Activated CD8-positive, alpha-beta T cell treated with anti-CD3 and anti-CD28 coated beads for 36 hours (primary cell): ENCODE measurements at regions of chrX and their contacts with region 1.

Region 1: DNA sequence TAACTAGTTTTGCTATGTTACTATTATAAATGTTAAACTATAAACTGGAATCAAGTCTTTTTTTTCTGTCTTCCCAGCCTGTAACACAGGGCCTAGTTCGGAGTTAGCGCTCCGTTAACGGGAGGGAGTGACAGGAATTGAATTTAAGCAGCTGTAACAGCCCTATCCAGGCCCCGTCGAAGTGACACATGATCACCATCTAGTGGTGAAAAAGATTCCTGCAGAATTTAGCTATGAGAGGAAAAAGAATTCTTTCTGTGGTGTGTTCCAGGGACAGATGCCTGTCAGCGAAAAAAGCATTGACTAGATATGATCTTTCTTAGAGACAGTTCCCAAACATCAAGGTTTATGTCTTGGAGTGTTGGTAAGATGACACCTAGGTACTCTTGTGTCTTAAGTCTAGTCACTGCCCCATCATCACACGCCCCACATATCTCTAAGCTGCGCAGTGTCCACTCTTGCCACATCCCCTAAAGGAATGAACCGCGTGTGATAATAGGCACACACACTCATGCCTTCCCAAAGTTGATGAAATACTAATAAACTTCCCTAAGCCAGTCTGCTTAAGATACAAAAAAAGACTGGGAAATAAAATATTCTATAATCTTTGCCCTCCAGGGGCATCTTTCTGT is 2.0 kb downstream of the GAB3 start:
- DNase-seq: peak; percentile 54
- ATAC-seq: peak; percentile 70
- H3K4me3 Mint-ChIP-seq: peak overlapping the region; percentile 53
- H3K27ac Mint-ChIP-seq: no peak overlapping the region
- H3K4me1 Mint-ChIP-seq: peaks cover 30% of the 10 kb centered on the region
- H3K27me3 Mint-ChIP-seq: no peaks in the 10 kb centered on the region
- CTCF ChIP-seq: peak; percentile 75

Region 2: DNA sequence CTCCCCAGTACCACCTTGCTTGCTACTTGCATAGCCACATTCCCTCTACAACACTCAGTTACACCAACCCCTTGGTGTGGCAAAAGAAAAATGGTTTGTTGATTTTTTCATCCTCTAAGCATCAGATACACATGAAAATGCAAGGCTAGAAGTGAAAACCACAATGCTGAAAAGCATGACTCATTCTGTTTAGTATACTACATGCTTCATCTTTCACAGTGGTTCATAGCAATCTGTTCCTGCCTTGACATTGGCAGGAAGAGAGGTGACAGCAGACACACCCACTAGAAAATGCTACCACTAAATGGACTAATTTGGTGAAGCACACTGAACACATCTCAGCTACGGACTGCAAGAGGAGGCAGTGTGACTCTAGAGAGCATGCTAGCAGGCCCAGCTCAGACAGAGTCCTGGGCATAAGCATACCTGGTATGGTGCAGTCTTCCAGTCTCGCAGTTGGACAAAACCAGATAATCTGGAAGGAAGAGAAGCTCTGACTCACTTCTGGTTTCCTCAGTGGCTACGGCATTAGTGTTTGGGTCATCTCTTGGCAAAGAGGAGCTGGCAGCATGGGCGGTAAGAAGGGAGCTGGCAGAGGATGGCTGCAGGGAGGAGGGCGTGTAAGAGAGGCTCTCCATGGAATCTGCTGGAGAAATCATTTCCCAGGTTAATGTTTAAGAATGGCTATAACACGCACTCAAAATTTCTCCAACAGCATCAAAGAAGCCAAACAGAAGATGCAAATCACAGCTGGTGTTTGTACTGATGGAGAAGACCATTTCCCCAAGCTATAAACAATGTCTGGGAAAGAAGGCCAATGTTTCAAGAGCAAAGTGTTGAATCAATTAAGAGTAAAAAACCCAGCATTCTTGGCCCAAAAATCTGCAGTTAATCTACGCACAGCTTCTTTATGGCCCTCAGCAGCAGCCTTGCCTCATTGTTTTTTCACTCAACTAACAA is 35.8 kb before region 1 on chrX:
- CTCF ChIA-PET with region 1: interaction called, 70 read pairs
- POLR2A ChIA-PET with region 1: interaction called, 3 read pairs
- intact Hi-C with region 1: no loop called
- DNase-seq: peak; percentile 30
- ATAC-seq: peak; percentile 93
- H3K4me3 Mint-ChIP-seq: no peak overlapping the region
- H3K27ac Mint-ChIP-seq: peak overlapping the region; percentile 55
- H3K4me1 Mint-ChIP-seq: peaks cover 38% of the 10 kb centered on the region
- H3K27me3 Mint-ChIP-seq: no peaks in the 10 kb centered on the region
- CTCF ChIP-seq: no peak

Region 3: GRCh38 chrX:154727871-154728270 is 21.0 kb before region 1 on chrX:
- CTCF ChIA-PET with region 1: interaction called, 38 read pairs
- POLR2A ChIA-PET with region 1: interaction called, 3 read pairs
- intact Hi-C with region 1: no loop called
- DNase-seq: no peak
- ATAC-seq: no peak
- H3K4me3 Mint-ChIP-seq: no peak overlapping the region
- H3K27ac Mint-ChIP-seq: no peak overlapping the region
- H3K4me1 Mint-ChIP-seq: peaks cover 93% of the 10 kb centered on the region
- H3K27me3 Mint-ChIP-seq: no peaks in the 10 kb centered on the region
- CTCF ChIP-seq: no peak

Region 4: DNA sequence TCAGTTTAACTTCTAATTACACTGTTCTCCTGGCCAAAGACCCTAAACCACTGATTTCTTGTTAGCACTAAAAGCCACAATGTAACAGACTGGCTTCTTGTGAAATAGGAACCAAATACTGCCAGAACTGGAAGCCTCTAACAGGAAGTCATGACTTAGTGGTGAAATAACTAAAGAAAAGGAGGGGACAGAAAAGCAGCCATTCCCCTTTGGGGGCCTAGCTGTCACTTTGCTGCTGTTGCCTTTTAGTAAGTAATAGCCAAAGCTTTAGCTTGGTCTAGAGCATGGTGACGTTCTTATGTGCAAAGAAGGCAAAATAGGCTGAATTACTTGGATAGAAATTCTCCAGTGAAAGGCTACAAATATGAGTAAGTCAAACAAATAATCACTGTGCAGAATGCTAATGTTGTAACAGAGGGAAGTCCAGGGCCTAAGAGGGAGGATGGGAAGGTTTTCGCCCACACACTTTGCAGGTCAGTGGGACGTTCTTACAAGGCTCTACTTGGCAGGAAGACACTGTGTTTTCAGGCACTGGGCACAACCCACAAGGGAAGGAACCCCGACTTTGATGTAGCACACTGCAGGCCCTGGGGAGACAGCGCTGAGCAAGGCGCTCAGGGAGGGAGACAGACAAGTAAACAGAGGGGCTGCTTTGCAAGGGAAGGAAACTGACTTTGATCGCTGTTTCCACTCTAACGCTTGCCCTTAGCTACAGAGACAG is 14.6 kb before region 1 on chrX:
- CTCF ChIA-PET with region 1: interaction called, 41 read pairs
- POLR2A ChIA-PET with region 1: interaction called, 3 read pairs
- intact Hi-C with region 1: no loop called
- DNase-seq: peak; percentile 45
- ATAC-seq: peak; percentile 58
- H3K4me3 Mint-ChIP-seq: peak overlapping the region; percentile 64
- H3K27ac Mint-ChIP-seq: peak overlapping the region; percentile 96
- H3K4me1 Mint-ChIP-seq: peaks cover 98% of the 10 kb centered on the region
- H3K27me3 Mint-ChIP-seq: no peaks in the 10 kb centered on the region
- CTCF ChIP-seq: no peak

Region 5: DNA sequence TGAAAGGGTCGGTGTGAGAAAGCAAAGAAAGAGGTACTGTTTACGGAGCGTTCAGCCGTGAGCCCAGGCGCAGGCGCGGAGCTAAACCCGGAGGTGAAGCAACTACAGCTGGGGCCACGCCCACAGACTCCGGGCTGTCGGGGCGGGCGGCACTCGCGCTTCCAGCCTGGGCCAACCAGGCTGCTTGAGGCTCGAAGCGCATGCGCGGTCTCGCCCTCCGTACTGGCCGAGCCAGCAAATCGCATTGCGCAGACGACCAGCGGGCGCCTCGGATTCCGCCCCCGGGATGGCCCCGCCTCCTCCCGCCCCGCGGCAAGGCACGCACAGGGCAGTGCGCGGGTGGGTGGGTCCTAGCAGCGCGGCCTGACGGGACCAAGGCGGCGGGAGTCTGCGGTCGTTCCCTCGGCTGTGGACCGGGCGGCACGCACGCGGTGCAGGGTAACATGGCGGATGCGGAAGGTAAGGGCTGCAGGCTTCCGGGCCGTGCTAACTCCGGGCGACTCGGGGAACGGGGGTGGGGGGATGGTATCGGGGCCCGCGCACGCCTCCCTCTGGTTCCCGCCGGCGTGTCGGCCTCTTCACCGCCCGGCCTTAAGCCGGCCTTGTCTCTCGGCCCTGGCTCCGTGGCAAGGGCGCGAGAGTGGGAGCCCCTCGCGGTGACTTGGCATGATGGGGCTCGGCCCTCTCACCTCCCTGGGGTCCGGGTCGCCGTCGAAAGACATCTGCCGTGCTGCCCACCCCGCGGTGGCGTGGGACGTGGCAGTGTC is 13.9 kb after region 1 on chrX and contains the start of gene DKC1:
- CTCF ChIA-PET with region 1: interaction called, 18 read pairs
- POLR2A ChIA-PET with region 1: interaction called, 12 read pairs
- intact Hi-C with region 1: no loop called
- DNase-seq: peak; percentile 95
- ATAC-seq: peak; percentile 90
- H3K4me3 Mint-ChIP-seq: peak within 1 kb of the TSS; percentile 87
- H3K27ac Mint-ChIP-seq: peak within 1 kb of the TSS; percentile 96
- H3K4me1 Mint-ChIP-seq: peaks cover 40% of the 10 kb centered on the region
- H3K27me3 Mint-ChIP-seq: no peaks in the 10 kb centered on the region
- CTCF ChIP-seq: no peak
- total RNA-seq, gene DKC1: 132 to 138 TPM

Region 6: GRCh38 chrX:154840856-154841255 is 92.0 kb after region 1 on chrX:
- CTCF ChIA-PET with region 1: interaction called, 14 read pairs
- POLR2A ChIA-PET with region 1: no interaction called
- intact Hi-C with region 1: no loop called
- DNase-seq: no peak
- ATAC-seq: peak; percentile 70
- H3K4me3 Mint-ChIP-seq: no peak overlapping the region
- H3K27ac Mint-ChIP-seq: no peak overlapping the region
- H3K4me1 Mint-ChIP-seq: peaks cover 3% of the 10 kb centered on the region
- H3K27me3 Mint-ChIP-seq: no peaks in the 10 kb centered on the region
- CTCF ChIP-seq: peak; percentile 64

Region 7: DNA sequence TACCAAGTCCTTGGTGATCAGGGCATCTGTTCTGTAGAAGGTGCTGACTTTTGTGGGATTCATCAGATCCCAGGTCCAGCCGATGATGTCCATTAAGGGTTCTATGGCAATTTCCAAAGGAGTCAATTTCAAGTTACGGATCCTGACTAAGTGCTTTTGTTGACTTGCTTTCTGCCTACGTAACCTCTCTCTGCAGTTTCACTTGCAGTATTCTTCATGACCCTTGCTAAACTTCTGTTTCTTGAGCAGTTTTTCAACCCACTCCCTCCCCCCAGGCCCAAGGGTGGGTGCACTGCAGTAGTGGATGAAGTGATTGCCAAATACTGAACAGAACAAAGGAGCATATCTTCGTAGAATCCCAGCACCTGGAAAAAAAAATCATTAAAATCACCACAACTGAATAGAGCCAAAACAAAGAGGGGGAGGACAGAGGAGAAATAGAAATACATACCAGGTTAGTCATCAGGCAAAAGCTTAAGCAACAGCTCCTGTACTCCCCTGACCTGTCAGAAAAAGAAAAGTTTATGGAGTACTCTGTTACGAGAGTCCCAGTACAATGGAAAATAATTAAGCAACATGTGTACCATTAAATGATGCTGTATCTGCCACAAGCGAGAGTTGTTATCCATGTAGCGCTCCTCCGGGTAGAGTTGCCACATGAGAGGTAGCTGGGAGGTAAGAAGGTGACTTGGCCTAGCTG is 316.4 kb after region 1 on chrX:
- CTCF ChIA-PET with region 1: no interaction called
- POLR2A ChIA-PET with region 1: no interaction called
- intact Hi-C with region 1: no loop called
- DNase-seq: no peak
- ATAC-seq: no peak
- H3K4me3 Mint-ChIP-seq: no peak overlapping the region
- H3K27ac Mint-ChIP-seq: no peak overlapping the region
- H3K4me1 Mint-ChIP-seq: peaks cover 34% of the 10 kb centered on the region
- H3K27me3 Mint-ChIP-seq: no peaks in the 10 kb centered on the region
- CTCF ChIP-seq: no peak